Activated CD8-positive, alpha-beta T cell treated with anti-CD3 and anti-CD28 coated beads for 36 hours (primary cell): ENCODE measurements at regions of chr14 and their contacts with region 1.

Region 1: GRCh38 chr14:55051426-55052268 is at the start of gene MAPK1IP1L:
- DNase-seq: peak; percentile 89
- ATAC-seq: peak; percentile 98
- H3K4me3 Mint-ChIP-seq: peak within 1 kb of the TSS; percentile 85
- H3K27ac Mint-ChIP-seq: peak within 1 kb of the TSS; percentile 95
- H3K4me1 Mint-ChIP-seq: peaks cover 35% of the 10 kb centered on the region
- H3K27me3 Mint-ChIP-seq: no peaks in the 10 kb centered on the region
- CTCF ChIP-seq: peak; percentile 100
- total RNA-seq, gene MAPK1IP1L: 89.3 to 105 TPM

Region 2: GRCh38 chr14:54981698-54982097 is 69.9 kb before region 1 on chr14:
- CTCF ChIA-PET with region 1: no interaction called
- POLR2A ChIA-PET with region 1: no interaction called
- intact Hi-C with region 1: no loop called
- DNase-seq: no peak
- ATAC-seq: no peak
- H3K4me3 Mint-ChIP-seq: no peak overlapping the region
- H3K27ac Mint-ChIP-seq: no peak overlapping the region
- H3K4me1 Mint-ChIP-seq: no peaks in the 10 kb centered on the region
- H3K27me3 Mint-ChIP-seq: no peaks in the 10 kb centered on the region
- CTCF ChIP-seq: no peak

Region 3: DNA sequence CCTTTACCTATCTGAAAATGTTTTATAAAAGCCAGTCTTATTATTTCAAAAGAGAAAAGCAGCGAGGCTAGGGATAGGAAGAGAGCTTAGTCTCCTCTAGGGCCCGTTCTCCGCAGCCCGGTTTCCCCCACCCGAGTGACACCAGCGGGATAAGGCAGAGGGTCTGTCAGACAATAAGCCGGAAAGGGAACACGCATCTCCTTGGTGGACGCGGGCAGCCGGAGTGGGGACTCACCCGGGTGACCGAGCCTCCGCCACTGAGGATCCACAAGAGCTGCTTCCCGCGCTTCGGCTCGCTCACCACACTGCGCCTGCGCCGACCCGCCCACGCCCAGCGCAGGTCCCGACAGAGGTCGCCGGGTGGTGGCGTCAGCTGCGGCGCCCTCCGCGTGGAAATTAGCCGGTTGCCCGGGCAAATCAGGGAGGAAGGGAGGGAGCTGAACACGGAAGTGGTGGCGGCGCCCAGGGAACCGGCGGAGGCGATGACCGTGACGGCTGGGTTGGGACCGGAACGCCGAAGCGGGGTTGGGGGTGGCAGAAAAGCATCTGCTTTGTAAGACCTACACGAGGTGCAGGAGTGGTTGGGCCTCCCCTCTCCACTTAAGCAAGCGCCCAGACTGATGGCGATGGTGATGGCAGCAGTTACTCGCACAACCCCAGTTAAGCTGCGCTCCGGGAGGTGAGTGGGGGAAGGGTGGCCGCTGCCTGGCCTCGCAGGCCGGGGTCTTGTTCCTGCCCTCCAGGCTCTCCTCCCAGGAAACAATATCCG is 24.7 kb before region 1 on chr14 and contains the starts of genes SOCS4 and WDHD1:
- CTCF ChIA-PET with region 1: interaction called, 50 read pairs
- POLR2A ChIA-PET with region 1: interaction called, 61 read pairs
- intact Hi-C with region 1: loop called (anchors 2 kb)
- DNase-seq: peak; percentile 97
- ATAC-seq: peak; percentile 95
- H3K4me3 Mint-ChIP-seq: peak within 1 kb of the TSS; percentile 98
- H3K27ac Mint-ChIP-seq: peak within 1 kb of the TSS; percentile 97
- H3K4me1 Mint-ChIP-seq: peaks cover 43% of the 10 kb centered on the region
- H3K27me3 Mint-ChIP-seq: no peaks in the 10 kb centered on the region
- CTCF ChIP-seq: no peak
- total RNA-seq, gene SOCS4: 19.8 to 20.8 TPM
- total RNA-seq, gene WDHD1: 59.8 to 68.4 TPM

Region 4: DNA sequence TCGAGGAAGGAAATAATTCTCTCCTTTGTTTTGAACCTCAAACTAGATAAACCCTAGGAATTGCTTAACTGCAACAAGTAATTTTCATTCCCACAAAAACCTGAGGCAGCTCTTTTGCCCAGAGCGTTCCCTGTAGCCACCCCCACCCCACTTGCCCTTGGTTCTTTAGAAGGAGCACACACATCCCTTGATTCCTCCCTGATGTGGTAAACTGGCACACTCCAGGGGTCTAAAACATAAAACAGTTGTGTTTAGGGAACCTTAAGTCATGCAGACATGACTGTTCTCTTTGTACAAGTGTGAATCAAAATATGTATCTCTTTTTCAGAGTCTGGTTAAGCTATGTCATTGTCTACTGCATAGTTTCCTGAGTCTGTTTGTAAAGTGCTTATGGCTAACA is 13.8 kb after region 1 on chr14:
- CTCF ChIA-PET with region 1: interaction called, 28 read pairs
- POLR2A ChIA-PET with region 1: interaction called, 18 read pairs
- intact Hi-C with region 1: no loop called
- DNase-seq: no peak
- ATAC-seq: no peak
- H3K4me3 Mint-ChIP-seq: no peak overlapping the region
- H3K27ac Mint-ChIP-seq: peak overlapping the region; percentile 38
- H3K4me1 Mint-ChIP-seq: peaks cover 14% of the 10 kb centered on the region
- H3K27me3 Mint-ChIP-seq: no peaks in the 10 kb centered on the region
- CTCF ChIP-seq: no peak

Region 5: DNA sequence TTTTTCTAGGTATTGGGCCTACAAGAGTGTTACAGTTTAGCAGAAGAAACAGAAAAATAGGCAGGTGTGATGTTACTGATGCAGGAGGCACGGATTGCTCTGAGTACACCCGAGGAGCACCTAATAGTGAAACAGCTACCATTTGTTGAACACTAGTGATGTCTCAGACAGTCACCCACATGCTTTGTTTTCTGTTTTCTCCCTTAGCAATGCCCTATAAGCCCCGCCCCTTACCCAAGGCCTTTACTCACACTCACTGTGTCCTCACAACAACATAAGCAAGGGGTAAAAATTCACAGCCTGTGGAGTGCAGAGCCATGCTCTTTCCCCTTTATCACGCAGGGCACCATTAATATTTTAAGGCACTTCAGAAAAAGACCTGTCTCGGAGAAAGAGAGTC is 25.5 kb after region 1 on chr14:
- CTCF ChIA-PET with region 1: interaction called, 28 read pairs
- POLR2A ChIA-PET with region 1: interaction called, 23 read pairs
- intact Hi-C with region 1: no loop called
- DNase-seq: peak; percentile 27
- ATAC-seq: peak; percentile 78
- H3K4me3 Mint-ChIP-seq: no peak overlapping the region
- H3K27ac Mint-ChIP-seq: no peak overlapping the region
- H3K4me1 Mint-ChIP-seq: peaks cover 15% of the 10 kb centered on the region
- H3K27me3 Mint-ChIP-seq: no peaks in the 10 kb centered on the region
- CTCF ChIP-seq: no peak

Region 6: GRCh38 chr14:55160989-55161388 is 109.3 kb after region 1 on chr14:
- CTCF ChIA-PET with region 1: interaction called, 12 read pairs
- POLR2A ChIA-PET with region 1: no interaction called
- intact Hi-C with region 1: no loop called
- DNase-seq: no peak
- ATAC-seq: peak; percentile 76
- H3K4me3 Mint-ChIP-seq: no peak overlapping the region
- H3K27ac Mint-ChIP-seq: no peak overlapping the region
- H3K4me1 Mint-ChIP-seq: no peaks in the 10 kb centered on the region
- H3K27me3 Mint-ChIP-seq: no peaks in the 10 kb centered on the region
- CTCF ChIP-seq: peak; percentile 47

Region 7: GRCh38 chr14:55715889-55716288 is 664.2 kb after region 1 on chr14:
- CTCF ChIA-PET with region 1: no interaction called
- POLR2A ChIA-PET with region 1: no interaction called
- intact Hi-C with region 1: no loop called
- DNase-seq: no peak
- ATAC-seq: no peak
- H3K4me3 Mint-ChIP-seq: no peak overlapping the region
- H3K27ac Mint-ChIP-seq: no peak overlapping the region
- H3K4me1 Mint-ChIP-seq: no peaks in the 10 kb centered on the region
- H3K27me3 Mint-ChIP-seq: no peaks in the 10 kb centered on the region
- CTCF ChIP-seq: no peak